GM12878 (cell line): ENCODE measurements at regions of chr20 and their contacts with region 1.

Region 1: GRCh38 chr20:37270576-37271420 is 9.2 kb upstream of the GHRH start:
- DNase-seq: peak; percentile 79
- ATAC-seq: peak; percentile 83
- H3K4me3 ChIP-seq: no peak overlapping the region
- H3K27ac ChIP-seq: peak overlapping the region; percentile 84
- H3K4me1 ChIP-seq: peaks cover 44% of the 10 kb centered on the region
- H3K27me3 ChIP-seq: no peaks in the 10 kb centered on the region
- CTCF ChIP-seq: no peak
- EP300 ChIP-seq: no peak; a peak in 1 of 4 replicates
- POLR2A ChIP-seq: no peak
- RAD21 ChIP-seq: peak; percentile 39; the same call in 1 of the 2 replicates

Region 2: GRCh38 chr20:37192137-37192854 is 78.5 kb before region 1 on chr20:
- CTCF ChIA-PET with region 1: interaction called, 76 read pairs
- POLR2A ChIA-PET with region 1: no interaction called
- RAD21 ChIA-PET with region 1: interaction called, 5 read pairs
- SMC1A ChIA-PET with region 1: interaction called, 6 read pairs
- in situ Hi-C with region 1: no loop called
- intact Hi-C with region 1: no loop called
- DNase-seq: no peak
- ATAC-seq: peak; percentile 88
- H3K4me3 ChIP-seq: no peak overlapping the region
- H3K27ac ChIP-seq: no peak overlapping the region
- H3K4me1 ChIP-seq: peaks cover 17% of the 10 kb centered on the region
- H3K27me3 ChIP-seq: no peaks in the 10 kb centered on the region
- CTCF ChIP-seq: peak; percentile 80 to 92 (median 91)
- EP300 ChIP-seq: no peak
- POLR2A ChIP-seq: no peak
- RAD21 ChIP-seq: peak; percentile 17; the same call in 1 of the 2 replicates

Region 3: DNA sequence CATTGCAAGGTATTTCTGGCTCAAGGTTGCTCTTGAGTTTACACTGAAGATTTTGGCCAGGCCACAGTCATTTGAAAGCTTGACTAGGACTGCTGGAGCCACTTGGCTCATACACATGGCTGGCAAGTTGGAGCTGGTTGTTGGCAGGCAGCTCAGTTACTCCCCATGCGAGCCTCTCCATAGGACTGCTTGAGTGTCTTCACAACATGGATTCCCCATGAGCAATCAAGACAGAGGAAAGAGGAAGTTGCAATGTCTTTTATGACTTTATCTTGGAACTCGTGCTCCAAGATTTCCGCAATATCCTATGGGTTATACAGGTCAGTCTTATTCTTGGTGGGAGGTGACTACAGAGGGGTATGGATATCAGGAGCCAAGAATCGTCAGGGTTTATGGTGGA is 17.3 kb after region 1 on chr20:
- CTCF ChIA-PET with region 1: interaction called, 15 read pairs
- POLR2A ChIA-PET with region 1: interaction called, 11 read pairs
- RAD21 ChIA-PET with region 1: interaction called, 21 read pairs
- SMC1A ChIA-PET with region 1: interaction called, 17 read pairs
- in situ Hi-C with region 1: no loop called
- intact Hi-C with region 1: loop called (anchors 1 kb)
- DNase-seq: no peak
- ATAC-seq: no peak
- H3K4me3 ChIP-seq: no peak overlapping the region
- H3K27ac ChIP-seq: no peak overlapping the region
- H3K4me1 ChIP-seq: peaks cover 16% of the 10 kb centered on the region
- H3K27me3 ChIP-seq: no peaks in the 10 kb centered on the region
- CTCF ChIP-seq: no peak
- EP300 ChIP-seq: no peak
- POLR2A ChIP-seq: no peak
- RAD21 ChIP-seq: no peak

Region 4: DNA sequence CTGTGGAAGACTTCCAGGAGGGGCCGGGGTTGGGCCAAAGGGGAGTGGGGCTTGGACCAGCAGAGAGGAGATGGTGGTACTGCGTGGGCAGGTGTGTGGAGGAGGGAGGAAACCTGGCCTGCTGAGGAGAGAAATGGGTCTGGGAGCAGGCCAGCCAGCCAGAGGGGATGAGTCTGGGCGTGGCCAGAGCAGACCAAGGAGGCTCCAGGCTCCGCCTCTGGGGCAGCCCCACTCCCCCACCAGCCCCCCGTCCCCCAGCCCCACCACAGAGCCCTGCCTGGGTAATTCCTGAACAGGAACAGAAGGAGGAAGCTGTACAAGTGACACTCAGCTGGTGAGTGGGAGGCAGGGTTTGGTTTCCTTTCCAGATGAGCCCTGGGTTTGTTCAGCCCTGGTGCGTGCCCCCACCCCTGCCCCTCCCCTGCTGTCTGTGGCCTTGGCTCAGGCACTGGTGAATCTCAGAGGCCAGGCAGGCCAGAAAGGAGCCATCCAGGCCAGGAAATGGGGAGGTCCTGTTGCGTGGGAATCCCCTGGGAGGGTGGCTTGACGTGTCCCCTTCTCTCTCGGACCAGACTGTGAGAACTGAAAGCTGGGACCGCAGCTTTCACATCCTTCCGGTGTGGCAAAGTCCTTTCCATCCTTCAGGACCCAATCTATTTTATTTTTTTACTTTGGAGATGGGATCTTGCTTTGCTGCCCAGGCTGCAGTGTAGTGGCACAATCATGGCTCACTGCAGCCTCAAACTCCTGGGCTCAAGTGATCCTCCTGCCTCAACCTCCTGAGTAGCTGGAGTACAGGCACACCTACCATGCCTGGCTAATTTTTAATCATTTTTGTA is 65.8 kb after region 1 on chr20:
- CTCF ChIA-PET with region 1: no interaction called
- POLR2A ChIA-PET with region 1: no interaction called
- RAD21 ChIA-PET with region 1: interaction called, 15 read pairs
- SMC1A ChIA-PET with region 1: interaction called, 11 read pairs
- in situ Hi-C with region 1: no loop called
- intact Hi-C with region 1: loop called (anchors 1 kb)
- DNase-seq: peak; percentile 94
- ATAC-seq: peak; percentile 88
- H3K4me3 ChIP-seq: peak overlapping the region; percentile 58; the same call in 1 of the 2 replicates
- H3K27ac ChIP-seq: peak overlapping the region; percentile 87
- H3K4me1 ChIP-seq: peaks cover 38% of the 10 kb centered on the region
- H3K27me3 ChIP-seq: no peaks in the 10 kb centered on the region
- CTCF ChIP-seq: no peak
- EP300 ChIP-seq: peak; percentile 66 to 81; a peak in 3 of 4 replicates
- POLR2A ChIP-seq: peak; percentile 41; the same call in 1 of the 2 replicates
- RAD21 ChIP-seq: no peak

Region 5: DNA sequence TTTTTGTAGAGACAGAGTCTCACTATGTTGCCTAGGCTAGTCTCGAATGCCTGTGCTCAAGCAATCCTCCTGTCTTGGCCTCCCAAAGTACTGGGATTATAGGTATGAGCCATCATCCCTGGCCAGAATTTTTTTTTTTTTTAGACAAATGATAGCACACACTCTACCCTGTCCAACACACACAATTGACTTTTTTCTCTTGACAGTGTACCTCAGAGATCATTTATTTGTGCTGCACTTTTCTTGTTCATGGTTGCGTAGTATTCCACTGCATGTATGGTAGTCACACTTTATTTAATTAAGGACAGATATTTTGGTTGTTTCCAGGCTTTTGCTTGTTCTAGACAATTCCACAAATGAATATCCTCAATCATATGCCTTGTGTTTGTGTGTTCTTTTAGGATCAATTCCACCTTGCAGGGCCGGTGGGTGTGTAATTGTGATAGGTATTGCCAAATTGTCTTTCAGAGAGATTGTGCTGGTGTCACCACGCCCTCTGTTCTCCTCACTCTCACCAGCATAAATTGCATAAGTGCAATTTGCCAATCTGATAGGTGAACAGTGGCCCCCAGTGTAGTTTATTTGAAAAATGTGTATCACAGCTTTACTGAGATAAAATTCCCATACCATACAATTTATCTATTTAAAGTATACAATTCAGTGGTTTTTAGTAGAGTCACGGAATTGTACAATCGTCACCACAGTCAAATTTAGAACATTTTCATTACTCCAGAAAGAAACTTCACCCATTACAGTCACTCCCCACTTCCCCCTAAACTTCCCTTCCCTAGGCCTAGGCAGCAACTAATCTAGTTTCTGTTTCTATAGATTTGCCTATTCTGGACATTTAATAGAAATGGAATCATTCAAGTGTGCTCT is 95.2 kb after region 1 on chr20:
- CTCF ChIA-PET with region 1: interaction called, 14 read pairs
- POLR2A ChIA-PET with region 1: no interaction called
- RAD21 ChIA-PET with region 1: interaction called, 3 read pairs
- SMC1A ChIA-PET with region 1: interaction called, 9 read pairs
- in situ Hi-C with region 1: no loop called
- intact Hi-C with region 1: loop called (anchors 1 kb)
- DNase-seq: peak; percentile 90
- ATAC-seq: peak; percentile 86
- H3K4me3 ChIP-seq: peak overlapping the region; percentile 2; the same call in 1 of the 2 replicates
- H3K27ac ChIP-seq: peak overlapping the region; percentile 87
- H3K4me1 ChIP-seq: peaks cover 74% of the 10 kb centered on the region
- H3K27me3 ChIP-seq: no peaks in the 10 kb centered on the region
- CTCF ChIP-seq: peak in 1 of 3 experiments; percentile 2; a peak in 1 of 6 replicates
- EP300 ChIP-seq: peak; percentile 77 to 79; a peak in 3 of 4 replicates
- POLR2A ChIP-seq: no peak
- RAD21 ChIP-seq: peak; percentile 57

Region 6: DNA sequence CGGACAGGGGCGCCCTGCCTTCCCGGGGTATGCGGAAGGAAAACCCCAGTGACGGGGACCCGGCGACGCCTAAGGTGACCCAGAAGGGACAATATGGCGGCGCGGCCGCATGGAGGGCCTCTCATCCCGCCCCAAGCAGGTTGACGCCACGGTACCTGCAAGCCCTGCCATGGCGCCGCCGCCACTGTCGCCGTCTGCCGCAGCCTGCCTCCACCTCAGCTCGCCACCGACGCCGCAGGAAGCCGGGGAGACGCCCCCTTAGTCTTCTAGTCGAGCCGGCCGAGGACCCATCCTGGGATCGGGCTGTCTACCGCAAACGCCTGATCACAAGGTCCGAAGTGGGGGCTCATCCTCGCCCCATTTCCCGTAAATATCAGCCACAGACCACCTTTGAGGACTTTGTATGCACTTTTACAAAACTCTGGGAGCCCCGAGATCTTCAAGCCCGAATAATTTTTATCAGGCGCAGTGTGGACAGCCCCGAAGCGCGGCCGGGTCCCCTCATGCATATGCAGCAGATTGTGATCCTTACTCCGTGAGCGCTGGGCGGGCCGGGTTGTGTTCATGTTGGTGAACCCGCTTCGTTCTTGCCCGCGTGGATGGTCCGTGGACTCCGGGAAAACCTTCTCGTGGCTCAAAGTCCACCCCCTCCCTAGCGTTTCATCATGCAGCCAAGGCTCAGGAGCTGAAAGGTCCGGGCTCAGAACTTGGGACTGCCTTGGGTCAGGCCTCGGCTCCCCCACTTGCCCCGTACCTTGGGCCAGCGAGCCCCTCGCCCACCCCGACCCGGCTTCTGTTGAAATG is 257.0 kb after region 1 on chr20 and contains the start of gene BLCAP:
- CTCF ChIA-PET with region 1: interaction called, 282 read pairs
- POLR2A ChIA-PET with region 1: interaction called, 5 read pairs
- RAD21 ChIA-PET with region 1: interaction called, 119 read pairs
- SMC1A ChIA-PET with region 1: interaction called, 129 read pairs
- in situ Hi-C with region 1: loop called (anchors 5 kb)
- intact Hi-C with region 1: no loop called
- DNase-seq: peak; percentile 69
- ATAC-seq: peak; percentile 92
- H3K4me3 ChIP-seq: peak within 1 kb of the TSS; percentile 89
- H3K27ac ChIP-seq: peak within 1 kb of the TSS; percentile 100
- H3K4me1 ChIP-seq: peaks cover 16% of the 10 kb centered on the region
- H3K27me3 ChIP-seq: no peaks in the 10 kb centered on the region
- CTCF ChIP-seq: no peak
- EP300 ChIP-seq: no peak
- POLR2A ChIP-seq: peak; percentile 98
- RAD21 ChIP-seq: no peak
- polyA plus RNA-seq, gene BLCAP: 24.6 to 37.7 TPM

Region 7: DNA sequence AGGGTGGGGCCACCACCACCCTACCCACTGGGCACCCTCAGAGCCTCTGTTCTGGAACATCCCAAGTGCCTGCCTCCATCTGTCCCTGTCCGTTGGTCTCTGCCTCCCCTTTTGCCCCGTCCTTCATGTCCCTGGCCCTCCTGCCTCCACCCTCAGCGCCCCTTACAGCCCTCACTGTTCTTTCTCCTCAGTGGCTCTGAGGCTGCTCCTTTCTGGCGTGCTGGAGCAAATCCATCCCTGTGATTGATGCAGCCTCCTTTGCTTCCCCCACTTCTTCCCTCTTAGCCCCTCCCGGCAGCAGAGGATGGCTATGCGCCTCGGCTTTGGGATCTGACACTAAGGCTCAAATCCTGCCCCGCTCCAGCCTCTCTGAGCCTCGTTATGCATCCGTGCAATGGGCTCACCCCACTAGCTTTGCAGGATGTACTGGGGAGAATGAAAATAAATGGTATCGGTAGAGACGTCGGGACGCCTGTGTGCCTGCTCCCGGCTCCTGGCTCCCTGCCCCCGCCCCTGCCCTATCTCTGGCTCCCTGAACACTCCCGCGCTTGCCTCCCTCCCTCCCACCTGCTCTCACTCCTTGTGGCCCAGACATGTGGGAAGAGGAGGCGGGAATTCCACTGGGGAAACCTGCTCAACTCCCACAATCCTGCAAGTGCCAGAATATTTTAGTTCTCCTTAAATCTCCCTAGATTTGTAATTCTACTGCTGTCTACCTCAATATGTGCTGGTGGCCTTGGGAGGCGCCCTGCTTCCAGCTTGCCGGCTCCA is 645.2 kb after region 1 on chr20:
- CTCF ChIA-PET with region 1: no interaction called
- POLR2A ChIA-PET with region 1: no interaction called
- RAD21 ChIA-PET with region 1: no interaction called
- SMC1A ChIA-PET with region 1: no interaction called
- in situ Hi-C with region 1: no loop called
- intact Hi-C with region 1: no loop called
- DNase-seq: no peak
- ATAC-seq: no peak
- H3K4me3 ChIP-seq: no peak overlapping the region
- H3K27ac ChIP-seq: no peak overlapping the region
- H3K4me1 ChIP-seq: peaks cover 13% of the 10 kb centered on the region
- H3K27me3 ChIP-seq: no peaks in the 10 kb centered on the region
- CTCF ChIP-seq: no peak
- EP300 ChIP-seq: no peak
- POLR2A ChIP-seq: no peak
- RAD21 ChIP-seq: no peak